ENCODE measurements at regions of chr10 and their contacts with region 1.

Region 1: GRCh38 chr10:7417103-7417623 is 6.3 kb upstream of the SFMBT2 start:
- DNase-seq: no peak
- CTCF ChIP-seq: peak; percentile 30

Region 2: DNA sequence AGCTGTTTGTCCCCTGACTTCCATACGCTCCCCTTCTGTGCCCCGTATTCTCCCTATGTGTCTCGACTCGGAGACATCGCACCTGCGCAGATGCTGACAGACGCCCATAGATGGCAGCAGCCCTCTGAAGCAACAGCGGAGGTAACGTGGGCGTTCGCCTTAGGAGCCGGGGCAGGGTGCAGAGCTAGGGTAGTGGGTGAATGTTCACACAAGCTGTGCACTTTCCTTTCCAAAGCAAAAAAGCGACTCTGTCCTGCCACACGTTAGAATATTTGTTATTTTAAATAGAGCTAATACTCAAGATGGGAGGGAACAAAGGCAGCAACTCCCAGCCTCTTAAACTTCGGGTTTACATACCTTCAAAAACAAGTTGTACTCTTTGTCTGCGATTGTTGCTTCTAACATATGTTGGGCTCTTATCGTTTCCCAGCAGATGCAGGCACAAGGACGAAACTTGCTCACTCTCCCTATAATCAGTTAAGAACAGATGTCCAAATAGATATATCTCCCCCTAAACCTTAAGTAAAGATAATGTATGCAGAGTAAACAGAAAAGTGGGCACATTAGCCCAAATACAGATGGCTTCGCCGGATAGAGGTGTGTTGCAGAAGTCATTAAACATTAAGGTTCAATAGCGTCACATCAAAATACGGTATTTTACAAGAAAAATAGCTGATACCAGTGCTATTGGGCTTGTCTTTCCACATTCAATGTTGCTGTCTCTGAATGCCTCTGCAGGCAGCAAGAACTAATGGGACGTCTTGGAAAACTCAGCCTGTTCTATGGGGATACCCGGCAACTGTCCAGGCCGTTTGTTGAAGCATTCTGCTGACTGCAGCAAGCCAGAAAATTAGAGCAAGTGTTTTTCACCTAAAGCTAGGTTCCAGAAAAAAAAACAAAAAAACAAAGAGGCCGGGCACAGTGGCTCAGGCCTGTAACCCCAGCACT is 496.8 kb before region 1 on chr10:
- CTCF ChIA-PET with region 1: interaction called, 41 read pairs
- POLR2A ChIA-PET with region 1: no interaction called
- DNase-seq: peak; percentile 82
- CTCF ChIP-seq: peak; percentile 98

Region 3: DNA sequence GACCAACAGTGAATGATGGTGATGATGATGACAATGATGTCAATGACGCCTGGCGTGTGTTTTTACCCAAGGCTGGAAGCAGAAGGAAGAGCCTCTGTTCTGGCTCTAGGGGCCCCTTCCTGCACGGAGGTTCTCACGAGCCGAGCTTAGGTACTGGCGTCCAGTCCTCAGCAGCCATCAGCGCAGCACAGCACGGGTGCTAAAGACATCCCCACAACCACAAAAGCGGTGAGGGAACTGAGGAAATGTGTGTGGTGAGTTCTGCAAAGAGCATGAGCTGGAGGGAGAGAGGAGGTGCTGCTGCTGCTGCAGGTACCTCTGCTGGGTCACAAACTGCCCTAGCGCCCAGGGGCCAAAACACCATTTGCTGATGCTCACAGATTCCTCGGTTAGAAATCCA is 87.9 kb before region 1 on chr10:
- CTCF ChIA-PET with region 1: no interaction called
- POLR2A ChIA-PET with region 1: no interaction called
- DNase-seq: no peak
- CTCF ChIP-seq: no peak

Region 4: DNA sequence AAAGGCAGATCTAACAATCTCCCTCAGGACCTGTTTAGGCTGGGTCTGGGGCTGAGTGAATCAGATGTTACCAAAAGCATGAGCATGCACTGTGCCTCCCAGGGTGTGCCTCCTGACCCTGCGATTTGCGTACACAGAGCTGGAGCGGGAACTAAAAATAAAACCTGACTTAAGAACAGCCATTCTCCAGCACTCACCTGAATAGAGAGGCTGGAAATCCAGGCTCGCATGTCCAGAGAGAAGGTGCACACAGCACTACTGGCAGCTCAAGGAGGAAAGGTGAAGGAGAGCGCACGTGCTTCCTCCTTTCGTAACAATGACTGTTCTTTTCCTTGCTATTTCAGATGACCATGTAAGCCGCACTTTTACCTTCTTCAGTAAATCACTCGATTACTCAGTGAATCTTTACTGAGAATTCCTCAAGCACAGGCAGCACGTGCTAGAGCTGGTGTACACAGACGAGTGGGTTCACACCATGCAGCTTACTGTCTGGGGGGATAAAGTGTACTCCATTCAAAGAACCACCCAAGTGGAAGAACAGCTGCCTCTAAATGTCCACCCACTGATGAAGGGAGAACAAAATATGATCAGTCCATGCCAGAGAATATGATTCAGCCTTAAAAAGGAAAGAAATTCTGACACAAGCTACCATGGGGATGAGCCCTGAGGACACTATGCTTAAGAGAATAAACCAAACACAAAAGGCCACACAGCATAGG is 52.0 kb before region 1 on chr10:
- CTCF ChIA-PET with region 1: no interaction called
- POLR2A ChIA-PET with region 1: no interaction called
- DNase-seq: no peak
- CTCF ChIP-seq: no peak